H1 (cell line): ENCODE measurements at regions of chr2 and their contacts with region 1.

Region 1: DNA sequence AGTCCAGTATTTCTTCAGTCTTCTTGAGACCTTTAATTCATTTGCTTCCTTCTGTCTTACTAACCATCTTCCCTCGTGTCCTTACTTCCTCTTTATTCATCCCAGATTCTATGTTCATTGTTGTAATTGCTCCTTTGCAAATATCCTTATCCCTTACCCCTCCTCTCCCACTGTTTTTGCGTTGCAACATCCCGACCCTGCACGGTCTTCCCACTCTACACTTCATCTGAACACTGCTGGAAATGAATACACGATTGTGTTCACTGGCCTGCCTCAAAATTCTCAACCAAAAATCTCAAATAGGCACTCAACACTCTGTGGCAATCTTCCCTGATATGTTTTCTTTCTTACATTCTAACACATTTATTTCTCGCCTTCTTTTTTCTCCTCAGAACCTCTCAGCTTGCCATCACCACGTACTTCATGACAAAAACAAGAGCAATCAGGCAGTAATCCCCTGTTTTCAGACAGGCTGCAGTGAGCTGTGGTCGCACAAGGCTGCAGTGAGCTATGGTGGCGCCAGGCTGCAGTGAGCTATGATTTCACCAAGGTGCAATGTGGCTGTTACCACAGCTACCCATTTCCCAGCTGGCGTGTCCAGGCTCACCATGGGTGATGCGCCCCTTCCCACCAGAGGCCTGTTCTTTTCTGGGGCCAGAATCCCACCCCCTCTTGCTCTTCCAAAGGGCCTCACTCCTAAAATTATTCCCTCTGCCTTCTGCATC is 25.7 kb downstream of the TCF23 start:
- DNase-seq: no peak
- H3K4me3 ChIP-seq: no peak overlapping the region
- H3K27ac ChIP-seq: no peak overlapping the region
- H3K4me1 ChIP-seq: no peaks in the 10 kb centered on the region
- H3K27me3 ChIP-seq: no peaks in the 10 kb centered on the region; a peak in 4 of 7 replicates
- CTCF ChIP-seq: no peak
- EP300 ChIP-seq: no peak
- POLR2A ChIP-seq: no peak
- RAD21 ChIP-seq: no peak

Region 2: DNA sequence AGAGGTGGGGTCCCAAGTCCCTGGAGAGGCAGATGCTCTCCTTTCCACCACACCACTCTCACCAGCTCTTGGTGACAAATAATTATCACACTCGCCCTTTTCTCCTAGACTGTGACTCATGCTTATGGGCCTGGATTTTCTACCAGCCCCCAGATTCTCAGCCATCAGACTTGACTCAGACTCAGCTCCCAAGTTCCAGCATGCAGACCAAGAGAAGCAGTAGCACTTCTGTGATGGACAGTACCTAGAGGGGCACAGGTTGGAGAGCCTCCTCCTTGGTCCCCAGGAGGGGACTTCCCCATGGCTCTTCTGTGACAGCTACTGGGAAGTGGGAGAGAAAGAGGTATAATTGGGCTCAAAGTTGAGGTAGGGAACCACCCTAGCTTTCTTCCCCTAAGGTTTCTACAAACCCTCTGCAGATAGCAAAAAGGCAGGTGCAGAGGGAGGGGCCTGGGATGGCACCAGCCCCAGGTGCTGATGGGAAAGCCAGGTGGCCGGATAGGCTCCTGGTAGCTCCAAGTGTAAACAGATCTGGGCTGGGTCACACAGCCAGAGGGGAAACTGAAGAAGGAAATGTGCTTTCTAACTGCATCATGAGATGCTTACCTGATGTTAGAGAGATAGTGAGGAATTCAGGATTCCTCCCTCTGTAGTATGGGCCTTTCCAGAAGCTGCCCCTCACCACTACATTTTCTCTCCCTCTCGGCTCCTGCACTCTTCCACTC is 21.5 kb before region 1 on chr2:
- CTCF ChIA-PET with region 1: interaction called, 36 read pairs
- POLR2A ChIA-PET with region 1: interaction called, 3 read pairs
- DNase-seq: no peak
- H3K4me3 ChIP-seq: no peak overlapping the region
- H3K27ac ChIP-seq: no peak overlapping the region
- H3K4me1 ChIP-seq: no peaks in the 10 kb centered on the region; a peak in 1 of 7 replicates
- H3K27me3 ChIP-seq: no peaks in the 10 kb centered on the region
- CTCF ChIP-seq: no peak
- EP300 ChIP-seq: no peak
- POLR2A ChIP-seq: no peak
- RAD21 ChIP-seq: no peak

Region 3: GRCh38 chr2:27159271-27159670 is 15.2 kb before region 1 on chr2:
- CTCF ChIA-PET with region 1: interaction called, 36 read pairs
- POLR2A ChIA-PET with region 1: no interaction called
- DNase-seq: no peak
- H3K4me3 ChIP-seq: no peak overlapping the region
- H3K27ac ChIP-seq: no peak overlapping the region
- H3K4me1 ChIP-seq: no peaks in the 10 kb centered on the region; a peak in 1 of 7 replicates
- H3K27me3 ChIP-seq: no peaks in the 10 kb centered on the region
- CTCF ChIP-seq: no peak
- EP300 ChIP-seq: no peak
- POLR2A ChIP-seq: no peak
- RAD21 ChIP-seq: no peak

Region 4: GRCh38 chr2:27185331-27186026 is 11.0 kb after region 1 on chr2:
- CTCF ChIA-PET with region 1: interaction called, 33 read pairs
- POLR2A ChIA-PET with region 1: no interaction called
- DNase-seq: no peak
- H3K4me3 ChIP-seq: no peak overlapping the region
- H3K27ac ChIP-seq: no peak overlapping the region
- H3K4me1 ChIP-seq: no peaks in the 10 kb centered on the region
- H3K27me3 ChIP-seq: no peaks in the 10 kb centered on the region
- CTCF ChIP-seq: no peak
- EP300 ChIP-seq: no peak
- POLR2A ChIP-seq: no peak
- RAD21 ChIP-seq: no peak

Region 5: GRCh38 chr2:27471961-27472360 is 297.5 kb after region 1 on chr2:
- CTCF ChIA-PET with region 1: no interaction called
- POLR2A ChIA-PET with region 1: no interaction called
- DNase-seq: no peak
- H3K4me3 ChIP-seq: no peak overlapping the region
- H3K27ac ChIP-seq: no peak overlapping the region
- H3K4me1 ChIP-seq: no peaks in the 10 kb centered on the region
- H3K27me3 ChIP-seq: no peaks in the 10 kb centered on the region
- CTCF ChIP-seq: no peak
- EP300 ChIP-seq: no peak
- POLR2A ChIP-seq: no peak
- RAD21 ChIP-seq: no peak